CD14-positive monocyte (primary cell): ENCODE measurements at regions of chr6 and their contacts with region 1.

Region 1: GRCh38 chr6:111804627-111805235 is 68.5 kb downstream of the FYN start:
- DNase-seq: peak; percentile 46 to 78 (median 59)
- H3K4me3 ChIP-seq: no peak overlapping the region
- H3K4me3 Mint-ChIP-seq: no peak overlapping the region
- H3K27ac ChIP-seq: peak overlapping the region in 1 of 2 donors; percentile 68
- H3K27ac Mint-ChIP-seq: peak overlapping the region in 6 of 7 donors; percentile 31 to 89 (median 72)
- H3K4me1 ChIP-seq: peaks cover 15 to 37% of the 10 kb centered on the region in 2 donors
- H3K4me1 Mint-ChIP-seq: peaks cover 43% of the 10 kb centered on the region
- H3K27me3 ChIP-seq: no peaks in the 10 kb centered on the region
- H3K27me3 Mint-ChIP-seq: peaks cover 0 to 2% (median 0%) of the 10 kb centered on the region in 3 donors
- CTCF ChIP-seq: peak; percentile 17

Region 2: GRCh38 chr6:111873178-111874024 is 68.7 kb after region 1 on chr6 and contains the start of gene FYN:
- intact Hi-C with region 1: loop called in 1 of 2 experiments (anchors 10 kb)
- DNase-seq: peak; percentile 95 to 97 (median 96)
- H3K4me3 ChIP-seq: peak within 1 kb of the TSS; percentile 65 to 95 (median 89)
- H3K4me3 Mint-ChIP-seq: peak within 1 kb of the TSS; percentile 93 to 95
- H3K27ac ChIP-seq: peak within 1 kb of the TSS; percentile 71 to 88
- H3K27ac Mint-ChIP-seq: peak within 1 kb of the TSS; percentile 84 to 95 (median 93)
- H3K4me1 ChIP-seq: peaks cover 32 to 48% of the 10 kb centered on the region in 2 donors
- H3K4me1 Mint-ChIP-seq: peaks cover 48% of the 10 kb centered on the region
- H3K27me3 ChIP-seq: no peaks in the 10 kb centered on the region
- H3K27me3 Mint-ChIP-seq: no peaks in the 10 kb centered on the region
- CTCF ChIP-seq: peak; percentile 40
- polyA plus RNA-seq, gene FYN: 88.4 to 149 (median 114) TPM